ENCODE measurements at regions of chr13 and their contacts with region 1.

Region 1: DNA sequence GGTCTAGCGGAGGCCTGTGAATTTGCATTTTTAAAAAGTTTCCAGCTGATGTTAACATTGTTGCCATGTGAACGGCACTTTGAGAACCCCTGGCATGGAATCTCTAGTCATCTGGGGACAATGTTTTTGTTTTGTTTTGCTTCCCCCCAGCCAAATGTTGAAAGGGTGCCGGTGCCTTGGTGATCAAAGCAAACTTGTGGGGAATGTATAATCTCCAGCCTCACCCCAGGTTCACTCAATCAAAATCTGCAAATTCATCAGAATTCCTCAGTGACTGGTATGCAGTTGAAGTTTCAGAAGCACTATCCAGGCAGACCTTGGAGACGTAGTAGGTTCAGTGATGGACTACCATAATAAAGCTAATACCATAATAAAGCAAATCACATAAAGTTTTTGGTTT is 428.7 kb downstream of the MYO16 start:
- DNase-seq: no peak
- ATAC-seq: no peak
- H3K4me3 ChIP-seq: no peak overlapping the region
- H3K27ac ChIP-seq: no peak overlapping the region
- H3K4me1 ChIP-seq: no peaks in the 10 kb centered on the region
- H3K27me3 ChIP-seq: no peaks in the 10 kb centered on the region
- CTCF ChIP-seq: no peak
- POLR2A ChIP-seq: no peak
- RAD21 ChIP-seq: no peak

Region 2: GRCh38 chr13:109113427-109113826 is 55.3 kb after region 1 on chr13:
- CTCF ChIA-PET with region 1: no interaction called
- POLR2A ChIA-PET with region 1: no interaction called
- RAD21 ChIA-PET with region 1: no interaction called
- intact Hi-C with region 1: loop called (anchors 10 kb)
- DNase-seq: no peak
- ATAC-seq: no peak
- H3K4me3 ChIP-seq: no peak overlapping the region
- H3K27ac ChIP-seq: no peak overlapping the region
- H3K4me1 ChIP-seq: no peaks in the 10 kb centered on the region
- H3K27me3 ChIP-seq: no peaks in the 10 kb centered on the region
- CTCF ChIP-seq: no peak
- POLR2A ChIP-seq: no peak
- RAD21 ChIP-seq: no peak

Region 3: DNA sequence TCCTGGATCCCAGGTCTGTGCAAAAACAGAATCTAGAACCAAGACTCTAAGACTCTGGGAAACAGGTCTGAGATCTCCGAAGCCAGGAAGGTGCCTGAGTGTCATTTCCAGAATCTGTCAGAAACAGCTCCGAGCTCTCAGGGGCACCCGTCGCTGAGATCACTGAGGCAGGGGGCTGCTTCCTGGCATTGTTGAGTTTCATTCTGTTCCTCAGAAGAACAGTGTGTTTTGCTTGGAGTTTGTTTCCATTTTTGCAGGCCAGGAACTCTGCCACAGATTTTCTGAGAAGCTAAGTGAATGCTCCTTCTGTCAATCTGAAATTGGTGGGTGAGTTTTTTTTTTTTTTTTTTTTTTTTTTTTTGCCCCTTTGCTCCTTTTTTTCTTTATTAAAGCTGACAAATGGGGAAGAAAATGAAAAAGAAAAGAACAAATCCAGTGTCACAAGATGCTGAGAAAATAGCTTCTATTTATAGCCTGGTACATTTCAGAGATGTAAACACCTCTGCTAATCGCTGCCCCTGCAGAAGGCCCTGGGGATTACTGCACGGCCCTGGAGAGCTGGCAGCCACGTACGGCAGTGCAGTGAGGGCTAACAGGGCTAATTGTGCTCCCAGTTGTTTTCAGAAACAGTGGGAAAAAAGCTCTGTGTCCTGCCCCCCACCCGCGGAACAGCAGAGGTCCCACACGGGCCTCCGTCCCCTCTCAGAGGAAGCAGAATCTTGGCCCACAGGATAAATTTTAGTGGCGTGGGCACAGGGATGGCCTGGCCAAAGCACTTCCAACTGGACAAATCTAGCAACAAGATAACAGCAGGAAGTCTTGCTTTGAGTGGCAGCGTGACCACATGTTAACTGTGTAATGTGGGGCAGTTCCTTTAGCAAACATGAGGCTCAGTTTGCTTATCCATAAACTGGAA is 965.9 kb after region 1 on chr13:
- CTCF ChIA-PET with region 1: no interaction called
- POLR2A ChIA-PET with region 1: no interaction called
- RAD21 ChIA-PET with region 1: no interaction called
- intact Hi-C with region 1: no loop called
- DNase-seq: no peak
- ATAC-seq: no peak
- H3K4me3 ChIP-seq: no peak overlapping the region
- H3K27ac ChIP-seq: no peak overlapping the region
- H3K4me1 ChIP-seq: no peaks in the 10 kb centered on the region
- H3K27me3 ChIP-seq: no peaks in the 10 kb centered on the region
- CTCF ChIP-seq: no peak
- POLR2A ChIP-seq: no peak
- RAD21 ChIP-seq: no peak

Measured in HCT116 (cell line).